Activated naive CD4-positive, alpha-beta T cell treated with anti-CD3 and anti-CD28 coated beads for 36 hours (primary cell): ENCODE measurements at regions of chr12 and their contacts with region 1.

Region 1: GRCh38 chr12:42568952-42569915 is 20.3 kb downstream of the PRICKLE1 start:
- DNase-seq: no peak
- H3K4me3 Mint-ChIP-seq: no peak overlapping the region
- H3K27ac Mint-ChIP-seq: no peak overlapping the region
- H3K4me1 Mint-ChIP-seq: no peaks in the 10 kb centered on the region
- H3K27me3 Mint-ChIP-seq: peaks cover 2% of the 10 kb centered on the region

Region 2: GRCh38 chr12:41277116-41277945 is 1291.9 kb before region 1 on chr12:
- CTCF ChIA-PET with region 1: no interaction called
- intact Hi-C with region 1: loop called (anchors 5 kb)
- DNase-seq: peak; percentile 28
- H3K4me3 Mint-ChIP-seq: no peak overlapping the region
- H3K27ac Mint-ChIP-seq: no peak overlapping the region
- H3K4me1 Mint-ChIP-seq: no peaks in the 10 kb centered on the region
- H3K27me3 Mint-ChIP-seq: no peaks in the 10 kb centered on the region

Region 3: DNA sequence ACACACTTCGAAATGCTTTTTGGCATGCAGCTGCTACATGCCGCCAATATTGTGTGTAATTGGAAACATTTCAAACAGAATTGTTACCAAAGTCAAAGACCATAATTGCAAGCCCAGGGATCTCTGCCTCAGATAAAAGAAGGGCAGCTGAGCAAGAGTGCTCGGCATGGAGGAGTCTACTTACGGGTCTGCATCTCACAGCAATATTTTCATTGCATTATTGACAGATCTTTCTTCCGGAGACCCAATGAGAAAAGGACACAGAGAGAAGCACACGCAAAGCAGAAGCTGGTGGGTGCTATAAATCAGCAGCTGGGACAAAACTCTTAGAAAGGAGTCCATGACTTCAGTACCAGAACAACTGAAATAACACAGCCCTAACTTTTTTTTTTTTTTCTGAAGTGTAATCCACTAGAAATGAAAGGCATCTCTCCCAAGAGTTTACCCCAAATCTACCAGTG is 15.4 kb after region 1 on chr12:
- CTCF ChIA-PET with region 1: interaction called, 13 read pairs
- intact Hi-C with region 1: no loop called
- DNase-seq: no peak
- H3K4me3 Mint-ChIP-seq: no peak overlapping the region
- H3K27ac Mint-ChIP-seq: no peak overlapping the region
- H3K4me1 Mint-ChIP-seq: peaks cover 7% of the 10 kb centered on the region
- H3K27me3 Mint-ChIP-seq: peaks cover 38% of the 10 kb centered on the region